PC-9 (cell line): ENCODE measurements at regions of chr15 and their contacts with region 1.

Region 1: DNA sequence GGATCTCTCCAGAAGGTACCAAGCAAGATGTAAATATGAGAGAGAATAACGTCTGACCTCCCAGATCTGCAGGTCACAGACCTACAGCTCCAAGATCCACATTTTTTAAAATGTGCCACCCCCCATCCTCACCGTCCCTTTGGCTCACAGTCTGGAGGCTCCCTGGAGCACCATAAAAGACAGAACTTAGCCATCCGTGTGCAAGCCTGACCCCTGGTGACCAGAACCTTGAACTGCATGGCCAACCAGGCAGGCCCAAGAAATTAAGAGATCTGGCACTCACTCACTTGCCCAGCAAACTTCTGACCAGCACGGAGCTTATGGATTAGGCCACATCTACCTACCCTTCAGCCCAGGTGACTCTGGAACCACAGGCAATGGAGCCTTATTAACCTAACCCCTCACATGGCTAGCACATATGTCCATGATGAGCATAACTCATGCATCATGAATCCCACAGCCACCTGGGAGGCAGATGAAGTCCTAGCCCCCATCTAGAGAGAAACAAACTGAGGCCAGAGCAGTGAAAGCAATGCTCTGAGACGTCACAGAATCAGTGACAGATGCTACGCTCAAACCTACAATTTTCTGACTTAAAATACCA is 275.3 kb downstream of the UACA start:
- DNase-seq: peak; percentile 57 to 68
- H3K4me3 ChIP-seq: no peak overlapping the region
- H3K27ac ChIP-seq: 0 out of 2 replicates have a peak overlapping the region, but pooled peaks have one; percentile 91
- H3K4me1 ChIP-seq: peaks cover 53% of the 10 kb centered on the region
- H3K27me3 ChIP-seq: no peaks in the 10 kb centered on the region
- CTCF ChIP-seq: peak; percentile 95

Region 2: GRCh38 chr15:70091726-70092463 is 396.2 kb before region 1 on chr15:
- CTCF ChIA-PET with region 1: interaction called, 5 read pairs
- POLR2A ChIA-PET with region 1: no interaction called
- intact Hi-C with region 1: loop called (anchors 2 kb)
- DNase-seq: peak; percentile 62 to 88
- H3K4me3 ChIP-seq: peak overlapping the region; percentile 84; the same call in 1 of the 2 replicates
- H3K27ac ChIP-seq: 0 out of 2 replicates have a peak overlapping the region, but pooled peaks have one; percentile 82
- H3K4me1 ChIP-seq: peaks cover 43% of the 10 kb centered on the region
- H3K27me3 ChIP-seq: no peaks in the 10 kb centered on the region
- CTCF ChIP-seq: no peak

Region 3: GRCh38 chr15:70271422-70272088 is 216.5 kb before region 1 on chr15:
- CTCF ChIA-PET with region 1: no interaction called
- POLR2A ChIA-PET with region 1: no interaction called
- intact Hi-C with region 1: loop called (anchors 1 kb)
- DNase-seq: peak; percentile 63 to 93
- H3K4me3 ChIP-seq: no peak overlapping the region
- H3K27ac ChIP-seq: peak overlapping the region; percentile 74
- H3K4me1 ChIP-seq: peaks cover 56% of the 10 kb centered on the region
- H3K27me3 ChIP-seq: no peaks in the 10 kb centered on the region
- CTCF ChIP-seq: no peak

Region 4: DNA sequence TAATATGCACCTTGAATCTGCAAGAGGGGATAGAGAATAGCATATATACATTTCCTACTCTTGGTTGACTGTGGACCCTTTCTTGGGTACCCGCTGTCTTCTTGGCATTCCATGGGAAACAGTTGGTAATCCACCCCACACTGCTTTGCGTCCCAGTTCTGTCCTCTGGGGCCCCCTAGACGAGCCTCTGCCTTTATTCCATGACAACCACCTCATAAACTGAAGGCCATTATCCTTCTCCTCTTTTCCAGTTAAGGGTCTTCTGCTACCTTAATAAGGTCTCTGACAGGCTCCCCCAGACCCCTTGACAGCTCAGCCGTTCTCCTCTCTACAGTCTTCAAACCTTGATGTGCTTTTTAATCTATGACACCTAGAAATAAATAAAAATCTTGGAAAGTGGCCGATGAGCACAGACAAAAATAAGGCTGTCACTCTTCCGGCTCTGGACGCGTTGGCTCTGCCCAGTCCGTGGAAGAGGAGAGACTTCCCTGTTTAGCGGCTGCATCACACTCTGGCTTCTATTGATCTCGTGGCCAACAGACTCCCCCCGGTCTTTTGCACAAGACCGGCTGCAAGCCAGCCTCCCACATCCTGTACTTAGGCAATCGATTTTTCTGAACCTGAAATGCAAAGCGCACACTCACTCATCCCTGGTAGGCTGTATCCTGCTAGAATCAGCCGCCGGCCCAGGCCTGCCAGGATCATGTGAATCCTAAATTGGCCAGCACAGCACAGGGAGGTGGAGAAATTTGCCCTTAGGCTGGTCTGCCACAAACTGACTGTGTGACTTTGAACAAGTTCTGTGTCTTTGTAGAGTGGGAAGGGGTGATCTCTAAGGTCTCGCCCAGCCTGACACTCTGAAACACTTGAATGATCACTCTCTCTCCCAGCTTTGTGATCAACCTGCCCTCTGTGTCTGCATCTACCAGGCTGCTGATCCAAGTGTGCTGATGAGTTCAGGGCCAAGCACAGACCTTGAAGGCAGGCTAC is 139.2 kb before region 1 on chr15:
- CTCF ChIA-PET with region 1: no interaction called
- POLR2A ChIA-PET with region 1: no interaction called
- intact Hi-C with region 1: no loop called
- DNase-seq: no peak
- H3K4me3 ChIP-seq: no peak overlapping the region
- H3K27ac ChIP-seq: peak overlapping the region; percentile 41; the same call in 1 of the 2 replicates
- H3K4me1 ChIP-seq: no peaks in the 10 kb centered on the region
- H3K27me3 ChIP-seq: no peaks in the 10 kb centered on the region
- CTCF ChIP-seq: no peak

Region 5: DNA sequence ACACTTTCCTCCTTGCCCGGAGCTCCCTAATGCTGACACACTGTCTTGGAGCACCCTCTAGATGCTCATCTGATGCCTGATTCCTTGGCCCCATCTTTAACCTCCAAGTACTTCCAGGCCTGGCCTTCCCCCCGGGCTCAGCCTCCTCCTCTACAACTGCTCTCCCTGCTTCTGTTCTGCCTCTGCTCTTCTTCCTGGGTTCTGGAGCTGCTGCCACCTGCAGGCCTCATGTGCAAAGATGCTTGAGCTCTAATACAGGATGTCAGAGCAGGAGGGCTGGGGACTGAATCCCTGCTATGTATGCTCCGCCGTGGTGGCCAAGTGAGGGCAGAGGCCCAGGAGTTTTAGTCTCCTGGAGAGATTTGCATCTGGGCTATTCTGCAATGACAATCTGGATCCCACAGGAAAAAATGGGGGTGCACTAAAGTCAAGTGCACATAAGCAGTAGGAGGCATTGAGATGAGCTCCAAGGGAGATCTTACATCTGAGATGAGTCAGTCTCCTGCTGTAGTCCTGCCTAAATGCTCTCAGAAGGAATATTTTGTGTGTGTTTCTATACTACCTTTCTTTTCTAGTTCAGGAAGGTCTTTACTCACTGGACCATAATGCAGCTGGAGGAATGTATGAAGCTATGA is 21.1 kb before region 1 on chr15:
- CTCF ChIA-PET with region 1: no interaction called
- POLR2A ChIA-PET with region 1: no interaction called
- intact Hi-C with region 1: loop called (anchors 1 kb)
- DNase-seq: peak; percentile 42 to 49
- H3K4me3 ChIP-seq: no peak overlapping the region
- H3K27ac ChIP-seq: no peak overlapping the region
- H3K4me1 ChIP-seq: peaks cover 63% of the 10 kb centered on the region
- H3K27me3 ChIP-seq: no peaks in the 10 kb centered on the region
- CTCF ChIP-seq: peak; percentile 70

Region 6: DNA sequence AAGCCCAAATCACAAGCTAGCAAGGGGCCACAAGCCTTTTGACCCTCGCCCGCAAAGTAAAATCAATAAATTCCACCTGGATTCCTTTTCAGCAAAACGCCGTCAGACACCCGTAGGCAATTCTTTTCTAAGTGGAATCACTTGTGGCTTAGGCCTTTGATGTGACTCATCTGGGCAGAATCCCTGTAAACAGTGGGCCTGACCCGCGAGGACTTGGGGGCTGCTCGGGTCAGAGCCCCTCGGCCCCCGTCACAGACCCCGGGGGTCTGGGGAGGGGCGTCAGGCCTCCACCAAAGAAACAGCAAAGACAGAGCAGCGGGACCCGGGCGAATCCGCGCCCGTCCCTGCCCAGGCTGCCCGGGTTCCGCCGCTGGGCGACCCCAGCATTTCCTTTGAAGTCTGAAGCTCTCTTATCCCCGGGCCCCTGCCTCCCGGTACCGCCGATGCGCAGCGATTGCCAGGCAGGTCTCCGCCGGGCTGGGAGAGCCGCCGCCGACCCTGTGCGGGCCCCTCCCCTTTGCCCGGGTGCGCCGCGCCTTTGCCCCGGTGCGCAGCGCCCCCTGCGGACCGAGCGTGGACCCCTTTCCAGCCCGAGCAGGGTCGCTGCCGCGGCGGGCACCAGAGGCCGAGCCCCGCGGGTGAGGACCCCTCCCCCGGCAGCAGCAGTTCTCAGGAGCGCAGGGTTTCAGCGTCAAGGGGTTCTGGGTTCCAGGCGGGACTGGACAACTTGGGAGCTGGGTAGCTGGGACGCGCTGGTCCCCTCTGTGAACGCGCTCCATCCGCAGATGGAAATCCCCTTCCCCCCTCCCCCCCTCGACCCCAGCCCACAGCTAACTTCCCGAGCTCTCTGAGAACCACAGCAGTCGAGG is 97.0 kb after region 1 on chr15:
- CTCF ChIA-PET with region 1: no interaction called
- POLR2A ChIA-PET with region 1: interaction called, 4 read pairs
- intact Hi-C with region 1: loop called (anchors 1 kb)
- DNase-seq: peak; percentile 71 to 86
- H3K4me3 ChIP-seq: peak overlapping the region; percentile 46; the same call in 1 of the 2 replicates
- H3K27ac ChIP-seq: peak overlapping the region; percentile 81
- H3K4me1 ChIP-seq: peaks cover 18% of the 10 kb centered on the region
- H3K27me3 ChIP-seq: no peaks in the 10 kb centered on the region
- CTCF ChIP-seq: peak; percentile 74